CD4-positive, alpha-beta T cell (primary cell): ENCODE measurements at regions of chr19 and their contacts with region 1.

Region 1: GRCh38 chr19:4723367-4724187 is at the start of gene DPP9:
- DNase-seq: peak; percentile 93 to 100 (median 96)
- ATAC-seq: peak; percentile 93
- H3K4me3 ChIP-seq: peak within 1 kb of the TSS; percentile 97
- H3K4me3 Mint-ChIP-seq: peak within 1 kb of the TSS; percentile 95
- H3K27ac ChIP-seq: peak within 1 kb of the TSS; percentile 64 to 85
- H3K27ac Mint-ChIP-seq: peak within 1 kb of the TSS; percentile 97
- H3K4me1 ChIP-seq: peaks cover 30% of the 10 kb centered on the region
- H3K4me1 Mint-ChIP-seq: peaks cover 25% of the 10 kb centered on the region
- H3K27me3 ChIP-seq: no peaks in the 10 kb centered on the region
- H3K27me3 Mint-ChIP-seq: peaks cover 13% of the 10 kb centered on the region
- CTCF ChIP-seq: no peak
- total RNA-seq, gene DPP9: 67.9 to 72.8 TPM

Region 2: DNA sequence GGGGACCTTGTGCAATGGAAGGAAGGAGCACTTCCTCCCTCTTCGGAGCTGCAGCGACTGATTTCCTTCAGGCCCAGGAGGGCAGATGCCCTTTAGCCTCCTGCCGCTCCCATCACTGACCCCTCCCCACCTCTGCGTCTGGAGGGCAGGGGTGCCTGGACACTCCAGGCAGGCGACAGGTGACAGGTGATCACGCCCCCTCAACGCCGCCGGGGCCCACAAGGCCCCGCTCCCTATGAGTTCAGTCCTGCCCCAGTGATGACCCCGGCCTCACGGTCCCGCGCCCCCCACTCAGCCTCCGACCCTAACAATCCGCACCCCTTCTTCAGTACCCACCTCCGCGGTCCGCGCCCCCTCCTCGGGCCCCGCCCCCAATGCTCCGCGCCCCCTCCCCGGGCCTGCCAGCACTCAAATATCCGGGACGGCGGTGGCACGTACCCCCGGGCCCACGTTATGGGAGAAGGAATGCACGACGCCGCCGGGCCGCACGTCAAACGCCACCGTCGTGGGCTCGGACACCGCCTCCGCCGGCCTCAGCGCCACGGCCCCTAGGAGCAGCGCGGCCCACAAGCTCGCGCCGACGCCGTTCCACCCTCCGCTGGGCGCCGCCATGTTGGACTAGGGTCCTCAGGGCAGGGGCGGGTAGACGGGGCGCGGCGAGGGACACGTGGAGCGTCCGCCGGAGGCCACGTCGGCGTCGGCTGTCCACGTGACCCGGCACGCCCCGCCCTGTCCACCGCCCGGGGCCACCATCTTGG is 53.7 kb before region 1 on chr19 and contains the start of gene MYDGF:
- CTCF ChIA-PET with region 1: no interaction called
- POLR2A ChIA-PET with region 1: no interaction called
- intact Hi-C with region 1: loop called in 1 of 2 experiments (anchors 2 kb)
- DNase-seq: peak; percentile 87 to 97 (median 92)
- ATAC-seq: peak; percentile 98
- H3K4me3 ChIP-seq: peak within 1 kb of the TSS; percentile 85
- H3K4me3 Mint-ChIP-seq: peak within 1 kb of the TSS; percentile 90
- H3K27ac ChIP-seq: peak within 1 kb of the TSS; percentile 69 to 75
- H3K27ac Mint-ChIP-seq: peak within 1 kb of the TSS; percentile 72
- H3K4me1 ChIP-seq: peaks cover 18% of the 10 kb centered on the region
- H3K4me1 Mint-ChIP-seq: peaks cover 12% of the 10 kb centered on the region
- H3K27me3 ChIP-seq: no peaks in the 10 kb centered on the region
- H3K27me3 Mint-ChIP-seq: no peaks in the 10 kb centered on the region
- CTCF ChIP-seq: no peak
- total RNA-seq, gene MYDGF: 22.0 to 23.0 TPM

Region 3: DNA sequence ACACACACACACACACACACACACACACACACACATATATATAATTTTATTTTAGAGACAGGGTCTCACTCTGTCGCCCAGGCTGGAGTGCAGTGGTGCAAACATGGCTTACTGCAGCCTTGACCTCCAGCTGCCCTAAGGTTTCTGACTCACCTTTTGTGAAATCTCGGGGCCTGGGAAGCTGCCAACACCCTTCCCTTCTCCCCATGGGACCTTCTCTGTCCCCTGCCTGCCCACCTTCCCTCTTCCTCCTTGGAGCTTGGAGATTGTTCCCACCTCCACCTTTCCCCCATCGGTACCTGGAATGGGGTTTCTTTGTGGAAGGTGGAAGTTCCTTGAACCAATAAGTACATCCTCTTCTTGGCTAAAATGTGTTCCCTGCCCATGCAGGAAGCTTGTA is 172.8 kb after region 1 on chr19:
- CTCF ChIA-PET with region 1: no interaction called
- POLR2A ChIA-PET with region 1: no interaction called
- intact Hi-C with region 1: no loop called
- DNase-seq: no peak
- ATAC-seq: no peak
- H3K4me3 ChIP-seq: no peak overlapping the region
- H3K4me3 Mint-ChIP-seq: no peak overlapping the region
- H3K27ac ChIP-seq: no peak overlapping the region
- H3K27ac Mint-ChIP-seq: no peak overlapping the region
- H3K4me1 ChIP-seq: no peaks in the 10 kb centered on the region
- H3K4me1 Mint-ChIP-seq: no peaks in the 10 kb centered on the region
- H3K27me3 ChIP-seq: no peaks in the 10 kb centered on the region
- H3K27me3 Mint-ChIP-seq: no peaks in the 10 kb centered on the region
- CTCF ChIP-seq: no peak

Region 4: DNA sequence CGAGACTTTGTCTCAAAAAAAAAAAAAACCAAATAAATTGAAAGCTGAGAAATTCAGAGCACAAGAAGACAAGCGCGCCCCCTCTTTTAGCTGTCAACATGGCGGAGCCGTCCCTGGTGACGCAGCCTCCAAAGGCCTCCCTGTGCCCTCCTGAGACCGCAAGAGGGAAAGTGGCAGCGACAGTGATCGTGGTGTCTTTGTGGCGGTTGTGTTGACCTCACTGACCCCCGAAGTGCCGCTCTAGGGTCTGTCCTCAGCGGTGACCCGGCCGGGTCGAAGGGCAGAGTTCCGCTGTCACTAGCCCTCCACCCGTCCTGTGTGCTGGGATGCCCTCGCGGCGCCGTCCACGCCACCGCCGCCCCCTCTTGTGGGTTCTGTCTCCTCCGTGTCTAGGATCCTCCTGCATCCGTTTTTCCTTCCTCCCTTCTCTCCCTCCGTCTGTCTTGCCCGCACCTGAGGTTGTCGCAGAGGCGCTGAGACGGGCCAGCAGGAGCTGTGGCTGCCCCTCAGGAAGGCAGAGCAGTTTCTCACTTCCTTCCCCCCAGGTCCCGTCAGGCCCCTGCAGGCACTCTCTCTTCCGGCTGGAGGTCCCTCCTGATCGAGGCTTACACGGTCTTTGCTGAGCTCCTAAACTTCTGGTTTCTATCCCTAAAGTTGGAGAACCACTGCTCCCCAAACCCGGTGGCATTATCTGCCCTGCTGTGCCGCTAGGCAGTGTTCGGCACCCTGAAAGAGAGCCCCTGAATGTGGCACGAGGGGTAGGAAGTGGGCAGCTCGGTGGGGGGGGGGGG is 192.9 kb after region 1 on chr19:
- CTCF ChIA-PET with region 1: no interaction called
- POLR2A ChIA-PET with region 1: interaction called, 4 read pairs
- intact Hi-C with region 1: loop called (anchors 5 to 10 kb)
- DNase-seq: peak; percentile 30 to 73 (median 46)
- ATAC-seq: peak; percentile 38
- H3K4me3 ChIP-seq: peak overlapping the region; percentile 82
- H3K4me3 Mint-ChIP-seq: peak overlapping the region; percentile 98
- H3K27ac ChIP-seq: peak overlapping the region; percentile 65 to 90
- H3K27ac Mint-ChIP-seq: peak overlapping the region; percentile 96
- H3K4me1 ChIP-seq: peaks cover 56% of the 10 kb centered on the region
- H3K4me1 Mint-ChIP-seq: peaks cover 38% of the 10 kb centered on the region
- H3K27me3 ChIP-seq: no peaks in the 10 kb centered on the region
- H3K27me3 Mint-ChIP-seq: no peaks in the 10 kb centered on the region
- CTCF ChIP-seq: no peak

Region 5: DNA sequence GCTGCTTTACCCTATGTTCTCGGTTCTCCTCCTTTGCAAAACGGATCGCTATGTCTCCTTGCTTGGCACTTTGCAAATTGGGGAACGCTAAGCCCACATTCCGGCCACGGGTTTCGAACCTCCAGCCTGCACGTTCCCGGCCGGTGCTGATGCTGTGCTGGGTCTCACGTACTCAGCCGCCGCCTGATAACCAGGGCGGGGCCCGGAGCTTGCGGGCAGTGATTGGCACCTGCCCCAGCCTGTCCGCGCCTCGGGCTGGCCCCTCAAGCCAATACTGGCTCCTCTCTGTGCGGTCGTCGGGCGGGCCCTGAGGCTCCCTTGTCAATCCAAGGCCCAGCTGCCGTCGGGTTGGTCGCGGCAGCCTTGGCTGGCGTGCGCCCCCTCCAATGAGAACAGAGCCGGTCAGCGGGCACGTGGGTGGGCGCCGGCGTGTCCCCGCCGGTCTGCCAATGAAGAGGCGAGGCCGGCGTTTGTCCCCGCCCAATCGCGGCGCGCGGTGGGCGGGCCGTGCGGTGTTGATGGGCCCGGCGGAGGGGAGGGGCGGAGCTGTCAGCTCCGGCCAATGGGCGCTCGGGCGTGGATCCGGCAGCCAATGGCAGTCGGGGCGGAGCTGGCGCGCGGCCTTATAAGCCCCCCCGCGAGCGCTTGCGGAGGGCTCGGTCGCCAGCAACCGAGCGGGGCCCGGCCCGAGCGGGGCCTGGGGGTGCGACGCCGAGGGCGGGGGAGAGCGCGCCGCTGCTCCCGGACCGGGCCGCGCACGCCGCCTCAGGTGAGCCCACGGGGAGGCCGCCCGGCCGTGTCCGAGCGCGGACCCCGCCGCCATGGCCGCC is 245.1 kb after region 1 on chr19 and contains the start of gene KDM4B:
- CTCF ChIA-PET with region 1: no interaction called
- POLR2A ChIA-PET with region 1: interaction called, 10 read pairs
- intact Hi-C with region 1: loop called in 1 of 2 experiments (anchors 5 kb)
- DNase-seq: peak; percentile 96 to 100 (median 98)
- ATAC-seq: peak; percentile 88
- H3K4me3 ChIP-seq: peak within 1 kb of the TSS; percentile 63
- H3K4me3 Mint-ChIP-seq: peak within 1 kb of the TSS; percentile 92
- H3K27ac ChIP-seq: peak within 1 kb of the TSS; percentile 18 to 59
- H3K27ac Mint-ChIP-seq: peak within 1 kb of the TSS; percentile 87
- H3K4me1 ChIP-seq: peaks cover 44% of the 10 kb centered on the region
- H3K4me1 Mint-ChIP-seq: peaks cover 32% of the 10 kb centered on the region
- H3K27me3 ChIP-seq: no peaks in the 10 kb centered on the region
- H3K27me3 Mint-ChIP-seq: no peaks in the 10 kb centered on the region
- CTCF ChIP-seq: no peak
- total RNA-seq, gene KDM4B: 41.8 to 42.5 TPM